Sigmoid colon (tissue), 7 donors: ENCODE measurements at regions of chr5 and their contacts with region 1.

Region 1: GRCh38 chr5:123209502-123210012 is 120.5 kb downstream of the PRDM6 start:
- DNase-seq: no peak
- H3K4me3 ChIP-seq: no peak overlapping the region
- H3K27ac ChIP-seq: peak overlapping the region in 3 of 4 donors; percentile 12 to 60 (median 33)
- H3K4me1 ChIP-seq: peaks cover 0 to 37% (median 31%) of the 10 kb centered on the region in 4 donors
- H3K27me3 ChIP-seq: no peaks in the 10 kb centered on the region
- CTCF ChIP-seq: no peak
- EP300 ChIP-seq: no peak
- POLR2A ChIP-seq: no peak

Region 2: GRCh38 chr5:123132316-123132715 is 77.2 kb before region 1 on chr5:
- intact Hi-C with region 1: loop called (anchors 5 kb)
- DNase-seq: no peak
- H3K4me3 ChIP-seq: no peak overlapping the region
- H3K27ac ChIP-seq: no peak overlapping the region
- H3K4me1 ChIP-seq: peaks cover 0 to 27% (median 16%) of the 10 kb centered on the region in 4 donors
- H3K27me3 ChIP-seq: no peaks in the 10 kb centered on the region
- CTCF ChIP-seq: no peak
- EP300 ChIP-seq: no peak
- POLR2A ChIP-seq: no peak

Region 3: DNA sequence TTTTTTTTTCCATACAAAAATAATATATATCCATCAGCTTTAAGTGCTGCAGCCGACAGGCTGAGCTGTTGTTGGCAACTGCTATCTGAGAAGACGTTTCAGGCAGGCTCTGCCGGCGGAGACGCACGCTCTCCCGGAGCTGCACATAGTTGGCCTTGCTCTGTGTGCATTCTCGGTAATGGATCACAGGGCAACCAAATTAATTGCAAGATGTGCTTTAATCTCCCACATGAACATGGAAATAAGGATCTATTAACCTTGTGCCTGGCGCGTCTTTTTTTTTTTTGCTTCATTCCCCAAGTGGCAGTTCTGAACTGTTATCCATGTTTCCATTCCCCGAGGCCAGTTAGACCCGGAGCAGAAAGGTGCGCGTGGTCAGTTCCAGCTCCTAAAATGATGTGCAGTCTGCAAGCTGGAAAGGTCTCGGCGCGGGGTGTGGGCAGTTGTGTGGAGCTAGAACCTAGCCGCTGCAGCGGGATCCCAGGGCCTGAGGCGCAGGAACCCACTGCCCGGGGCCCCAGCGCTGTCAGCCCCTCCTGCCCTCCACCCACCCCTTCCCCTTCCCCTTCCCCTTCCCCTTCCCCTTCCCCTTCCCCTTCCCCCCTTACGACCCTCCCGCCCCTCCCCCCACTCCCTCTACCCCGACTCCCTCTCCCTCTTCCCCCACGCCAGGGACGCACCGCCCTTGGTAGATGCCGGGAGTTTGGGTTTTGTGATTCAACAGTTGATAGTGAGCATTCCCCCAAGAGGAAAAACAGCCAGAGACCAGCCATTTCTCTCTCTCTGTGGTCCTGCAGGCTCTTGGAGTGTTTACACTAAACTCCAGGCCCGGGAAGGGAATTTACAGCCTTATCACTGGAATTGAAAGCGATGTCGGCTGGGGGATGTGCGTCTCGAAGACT is 75.8 kb after region 1 on chr5:
- intact Hi-C with region 1: loop called (anchors 5 kb)
- DNase-seq: peak; percentile 70
- H3K4me3 ChIP-seq: peak overlapping the region; percentile 22 to 44 (median 36)
- H3K27ac ChIP-seq: peak overlapping the region in 3 of 4 donors; percentile 76 to 82 (median 77)
- H3K4me1 ChIP-seq: peaks cover 0 to 28% (median 21%) of the 10 kb centered on the region in 4 donors
- H3K27me3 ChIP-seq: no peaks in the 10 kb centered on the region
- CTCF ChIP-seq: no peak
- EP300 ChIP-seq: no peak
- POLR2A ChIP-seq: no peak

Region 4: DNA sequence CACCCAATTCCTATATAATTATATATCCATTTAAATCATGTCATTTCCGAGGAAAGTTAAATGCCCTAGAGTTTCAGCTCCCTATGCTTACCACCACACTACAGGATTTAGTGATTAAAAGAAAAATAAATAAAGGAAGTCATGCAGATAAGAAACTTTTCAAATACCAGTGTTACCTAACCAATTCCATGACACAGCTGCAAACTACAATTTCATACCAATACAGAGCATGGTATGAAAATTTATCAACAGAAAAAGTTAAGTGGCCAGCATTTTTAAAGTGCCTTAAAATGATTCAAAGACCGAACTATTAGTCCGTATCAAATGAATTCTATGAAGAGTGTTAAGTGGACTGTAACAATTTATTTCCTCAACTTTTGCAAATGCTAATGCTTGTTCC is 177.8 kb after region 1 on chr5:
- intact Hi-C with region 1: no loop called
- DNase-seq: no peak
- H3K4me3 ChIP-seq: no peak overlapping the region
- H3K27ac ChIP-seq: no peak overlapping the region
- H3K4me1 ChIP-seq: no peaks in the 10 kb centered on the region
- H3K27me3 ChIP-seq: no peaks in the 10 kb centered on the region
- CTCF ChIP-seq: no peak
- EP300 ChIP-seq: no peak
- POLR2A ChIP-seq: no peak